CD8-positive, alpha-beta T cell (primary cell): ENCODE measurements at regions of chrX and their contacts with region 1.

Region 1: DNA sequence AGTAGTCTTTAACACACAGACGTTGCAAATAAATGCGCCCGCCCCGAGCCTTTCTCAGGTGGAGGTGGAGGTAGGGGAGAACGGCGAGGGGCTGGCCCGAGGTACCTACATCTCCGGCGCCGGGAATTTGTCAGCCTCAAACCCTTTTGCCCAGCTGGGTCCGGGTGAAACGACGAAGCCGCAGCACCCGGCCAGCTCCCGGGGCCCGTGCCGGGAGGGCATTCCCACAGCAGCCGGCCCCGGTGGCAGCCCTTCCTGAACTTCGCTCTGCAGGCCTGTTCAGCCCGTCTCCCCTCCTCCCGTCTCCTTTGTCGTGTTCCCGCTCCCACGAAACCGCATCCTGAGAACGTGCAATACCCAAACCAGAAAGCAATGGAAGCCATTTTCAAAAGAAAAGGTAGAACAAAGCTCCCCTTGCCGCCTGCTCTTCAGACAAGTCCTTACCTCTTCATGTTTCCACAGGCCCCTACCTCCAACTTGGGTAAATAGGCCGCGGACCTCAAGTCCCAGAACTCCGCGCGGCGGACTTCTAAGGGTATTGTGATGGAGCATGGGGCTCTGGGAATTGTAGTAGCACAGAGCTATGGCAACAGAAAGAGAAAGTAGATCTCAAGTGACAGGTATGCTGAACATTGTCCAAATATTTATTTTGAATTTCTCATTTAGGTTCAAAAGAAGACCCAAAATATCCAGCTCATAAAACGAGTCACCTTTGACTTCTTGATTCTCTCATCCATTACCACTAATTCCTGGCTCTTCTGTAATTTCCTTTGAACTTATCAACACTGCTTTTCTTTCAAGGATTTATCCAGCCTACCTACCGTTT is at the start of gene RBM41:
- DNase-seq: peak; percentile 46 to 87 (median 72)
- ATAC-seq: peak; percentile 99
- H3K4me3 ChIP-seq: peak within 1 kb of the TSS; percentile 68 to 70
- H3K4me3 Mint-ChIP-seq: peak within 1 kb of the TSS; percentile 95
- H3K27ac ChIP-seq: peak within 1 kb of the TSS; percentile 49 to 77
- H3K27ac Mint-ChIP-seq: peak within 1 kb of the TSS; percentile 95
- H3K4me1 ChIP-seq: peaks cover 11% of the 10 kb centered on the region
- H3K4me1 Mint-ChIP-seq: peaks cover 37% of the 10 kb centered on the region
- H3K27me3 ChIP-seq: no peaks in the 10 kb centered on the region
- H3K27me3 Mint-ChIP-seq: no peaks in the 10 kb centered on the region
- CTCF ChIP-seq: no peak
- total RNA-seq, gene RBM41: 6.9 to 7.8 TPM

Region 2: GRCh38 chrX:106611679-106612392 is 506.7 kb before region 1 on chrX and contains the start of gene RADX:
- CTCF ChIA-PET with region 1: no interaction called
- POLR2A ChIA-PET with region 1: no interaction called
- intact Hi-C with region 1: loop called in 1 of 2 experiments (anchors 10 kb)
- DNase-seq: peak; percentile 72 to 94 (median 83)
- ATAC-seq: peak; percentile 93
- H3K4me3 ChIP-seq: peak within 1 kb of the TSS; percentile 58 to 88
- H3K4me3 Mint-ChIP-seq: peak within 1 kb of the TSS; percentile 94
- H3K27ac ChIP-seq: peak within 1 kb of the TSS; percentile 77 to 81
- H3K27ac Mint-ChIP-seq: peak within 1 kb of the TSS; percentile 93
- H3K4me1 ChIP-seq: peaks cover 8% of the 10 kb centered on the region
- H3K4me1 Mint-ChIP-seq: peaks cover 35% of the 10 kb centered on the region
- H3K27me3 ChIP-seq: no peaks in the 10 kb centered on the region
- H3K27me3 Mint-ChIP-seq: no peaks in the 10 kb centered on the region
- CTCF ChIP-seq: no peak
- total RNA-seq, gene RADX: 8.9 to 9.1 TPM

Region 3: GRCh38 chrX:106999002-106999975 is 119.2 kb before region 1 on chrX:
- CTCF ChIA-PET with region 1: no interaction called
- POLR2A ChIA-PET with region 1: no interaction called
- intact Hi-C with region 1: loop called in 1 of 2 experiments (anchors 5 kb)
- DNase-seq: peak in 8 of 9 experiments; percentile 7 to 64 (median 45)
- ATAC-seq: peak; percentile 61
- H3K4me3 ChIP-seq: peak overlapping the region; percentile 46 to 53
- H3K4me3 Mint-ChIP-seq: peak overlapping the region; percentile 83
- H3K27ac ChIP-seq: peak overlapping the region in 1 of 2 experiments; percentile 35
- H3K27ac Mint-ChIP-seq: peak overlapping the region; percentile 86
- H3K4me1 ChIP-seq: peaks cover 4% of the 10 kb centered on the region
- H3K4me1 Mint-ChIP-seq: peaks cover 11% of the 10 kb centered on the region
- H3K27me3 ChIP-seq: no peaks in the 10 kb centered on the region
- H3K27me3 Mint-ChIP-seq: peaks cover 3% of the 10 kb centered on the region
- CTCF ChIP-seq: no peak

Region 4: DNA sequence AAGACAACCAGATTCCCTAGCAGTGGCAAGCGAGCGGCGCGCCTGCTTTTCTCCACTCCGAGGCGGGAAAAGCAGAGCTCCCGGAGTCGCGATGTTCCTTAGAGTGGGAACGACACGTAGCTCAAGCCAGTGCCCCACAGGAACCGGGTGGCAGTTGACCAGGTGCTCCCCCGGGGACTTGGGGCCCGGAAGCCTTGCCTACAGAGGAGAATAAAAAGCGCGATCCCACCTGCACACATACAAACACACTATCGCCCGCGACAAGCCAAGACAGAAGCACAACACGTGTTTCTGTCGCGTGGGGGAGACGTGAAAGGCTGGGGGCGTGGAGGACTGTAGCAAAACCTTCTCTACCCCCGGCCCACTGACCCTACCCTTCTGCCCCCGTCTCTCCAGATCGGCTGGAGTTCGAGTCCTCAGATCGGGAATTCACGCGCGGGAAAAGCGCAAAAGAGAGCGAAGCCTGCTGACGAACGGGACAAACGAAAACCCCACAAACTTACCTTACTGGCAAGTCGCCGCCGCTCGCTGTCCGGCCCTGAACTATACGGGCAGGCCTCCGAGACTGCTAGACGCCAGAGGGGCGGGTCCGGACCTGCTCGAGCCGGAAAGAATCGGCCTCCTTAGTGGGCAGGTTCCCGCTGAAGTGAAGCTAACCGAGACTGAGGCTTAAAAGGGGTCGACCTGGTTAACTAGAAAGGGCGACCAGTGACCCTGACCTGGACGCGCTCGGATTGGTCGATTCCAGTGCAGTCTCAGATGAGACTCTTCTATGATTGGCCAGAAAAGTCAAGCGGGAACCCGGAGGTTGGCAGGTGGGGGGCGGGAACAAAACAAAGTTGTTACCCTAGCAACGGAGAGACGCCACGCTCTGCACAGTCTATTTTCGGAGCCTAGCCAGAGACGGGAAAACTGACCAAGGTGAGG is 87.5 kb after region 1 on chrX and contains the starts of genes DNAAF6 and NUP62CL:
- CTCF ChIA-PET with region 1: no interaction called
- POLR2A ChIA-PET with region 1: no interaction called
- intact Hi-C with region 1: loop called (anchors 5 to 10 kb)
- DNase-seq: peak; percentile 28 to 82 (median 63)
- ATAC-seq: peak; percentile 85
- H3K4me3 ChIP-seq: peak within 1 kb of the TSS; percentile 63 to 71
- H3K4me3 Mint-ChIP-seq: peak within 1 kb of the TSS; percentile 89
- H3K27ac ChIP-seq: peak within 1 kb of the TSS in 1 of 2 experiments; percentile 29
- H3K27ac Mint-ChIP-seq: no peak within 1 kb of the TSS
- H3K4me1 ChIP-seq: no peaks in the 10 kb centered on the region
- H3K4me1 Mint-ChIP-seq: peaks cover 6% of the 10 kb centered on the region
- H3K27me3 ChIP-seq: no peaks in the 10 kb centered on the region
- H3K27me3 Mint-ChIP-seq: peaks cover 4% of the 10 kb centered on the region
- CTCF ChIP-seq: no peak
- total RNA-seq, gene DNAAF6: not detected
- total RNA-seq, gene NUP62CL: 0.65 to 0.75 TPM